ENCODE measurements at regions of chr16 and their contacts with region 1.

Region 1: DNA sequence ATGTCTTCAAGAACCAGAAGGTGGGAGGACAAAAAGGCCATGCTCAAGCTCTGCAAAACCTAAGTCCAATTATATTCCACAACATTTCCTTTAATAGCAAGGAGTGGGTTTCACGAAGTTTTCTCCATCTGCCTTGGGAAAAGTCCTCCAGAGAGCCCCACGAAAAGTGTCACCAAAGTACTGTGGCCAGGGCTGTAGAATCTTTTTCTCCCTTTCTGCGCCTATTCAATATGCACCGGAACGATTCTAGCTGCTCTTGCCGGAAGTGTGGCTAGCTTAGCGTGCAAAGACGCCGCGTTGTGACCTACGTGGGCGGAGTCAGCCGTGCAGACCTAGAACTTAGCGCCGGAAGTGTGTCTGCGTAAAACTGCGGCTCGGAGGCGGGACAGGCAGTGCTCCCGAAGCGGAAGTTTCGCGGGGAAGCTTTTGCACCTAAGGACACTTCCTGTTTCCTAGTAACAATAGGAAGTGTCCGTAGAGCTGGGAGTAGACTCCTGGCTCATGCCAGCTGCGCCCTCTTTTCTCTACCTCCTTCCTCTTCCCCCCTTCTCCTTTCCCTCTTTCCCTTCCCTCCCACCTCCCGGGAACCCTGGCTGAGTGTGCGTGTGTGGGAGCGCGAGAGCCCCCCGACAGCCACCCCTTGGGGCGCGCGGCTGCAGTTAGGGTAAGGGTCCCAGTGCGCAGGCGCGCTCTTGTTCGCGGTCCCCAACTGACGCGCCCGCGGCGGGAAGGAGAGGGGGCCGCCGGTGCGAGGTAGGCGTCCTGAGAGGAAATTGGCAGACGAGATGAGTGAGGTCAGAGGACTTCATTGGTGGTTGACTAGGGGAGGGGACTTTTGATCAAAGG is at the starts of genes ZNF646 and ZNF668:
- DNase-seq: peak; percentile 97 to 100 (median 99)

Region 2: DNA sequence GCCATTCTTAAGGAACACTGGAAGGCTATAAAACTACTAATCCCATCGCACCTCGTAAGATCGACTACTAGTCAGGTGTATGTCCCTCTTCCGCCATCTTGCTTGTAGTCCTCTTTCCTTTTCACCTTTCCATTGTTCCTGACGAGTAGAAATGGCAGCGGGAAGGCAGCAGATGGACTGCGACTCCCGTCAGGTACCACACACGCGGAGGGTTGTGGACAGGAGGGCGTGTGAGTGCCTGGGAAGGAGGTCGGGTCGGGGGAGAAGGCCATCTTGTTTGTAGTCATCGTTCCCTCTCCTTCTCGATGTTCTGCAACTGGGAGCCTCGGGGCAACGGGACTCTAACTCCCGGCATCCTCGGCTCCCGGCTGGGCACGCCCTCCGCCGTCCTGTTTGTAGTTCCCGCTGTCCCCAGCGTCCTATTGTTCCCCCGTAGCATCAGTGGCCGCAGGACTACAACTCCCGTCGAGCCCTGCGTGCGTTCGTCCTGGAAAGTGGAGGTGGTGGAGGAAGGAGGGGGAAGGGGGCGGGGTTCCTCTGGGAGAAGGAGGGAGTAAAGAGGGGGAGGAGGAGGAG is 151.1 kb before region 1 on chr16:
- intact Hi-C with region 1: no loop called
- DNase-seq: peak; percentile 99 to 100 (median 100)

Region 3: DNA sequence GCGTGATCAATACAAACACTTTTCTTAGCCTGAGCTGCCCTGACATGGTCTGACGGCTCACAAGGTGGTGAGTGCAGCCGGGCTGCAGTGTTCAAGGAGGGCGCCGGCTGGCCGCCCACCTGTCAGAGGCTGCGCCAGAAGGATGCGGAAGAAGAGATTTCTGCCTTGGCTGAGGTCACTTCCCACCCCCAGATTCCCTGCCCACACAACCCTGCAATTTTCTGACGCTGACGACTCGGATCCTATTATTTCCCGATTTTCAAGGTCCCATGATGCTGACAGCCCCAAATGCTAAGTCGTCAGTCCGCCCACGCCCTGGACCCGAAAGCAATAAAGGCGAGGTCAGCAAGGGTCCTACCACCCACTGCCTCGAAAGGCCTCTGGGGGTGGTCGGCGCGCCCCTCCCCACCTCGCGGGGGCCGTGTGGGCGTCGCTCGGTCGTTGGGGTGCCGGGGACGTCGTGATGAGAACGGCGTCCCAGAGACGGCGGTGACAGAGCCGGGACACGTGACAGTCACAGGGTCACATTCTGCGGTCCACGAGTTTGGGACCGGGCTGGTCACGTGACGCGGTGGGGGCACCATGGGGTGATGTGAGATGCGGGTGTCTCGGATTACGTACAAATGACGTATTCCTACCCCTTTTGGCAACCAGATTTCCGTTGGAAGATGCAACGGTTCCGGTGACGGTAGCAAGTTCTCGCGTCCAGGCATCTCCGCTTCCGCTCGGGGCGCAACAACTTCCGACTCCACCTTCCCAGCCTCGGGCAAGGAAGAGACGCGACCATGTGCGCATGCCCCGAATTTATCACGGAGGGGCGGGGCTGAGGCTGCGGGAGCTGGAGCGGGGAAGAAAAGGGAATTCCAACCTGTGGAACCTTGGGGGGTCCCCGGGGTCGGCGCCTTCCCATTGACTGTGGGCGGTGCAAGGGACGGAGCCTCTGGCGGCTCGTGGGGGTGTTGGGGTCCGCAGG is 41.2 kb before region 1 on chr16 and contains the start of gene STX4:
- intact Hi-C with region 1: loop called (anchors 5 kb)
- DNase-seq: peak; percentile 95 to 99 (median 97)